A673 (cell line): ENCODE measurements at regions of chr16 and their contacts with region 1.

Region 1: GRCh38 chr16:74226338-74226954 is 70.2 kb upstream of the PSMD7 start:
- DNase-seq: peak; percentile 62
- H3K4me3 ChIP-seq: no peak overlapping the region
- H3K27ac ChIP-seq: no peak overlapping the region
- H3K4me1 ChIP-seq: peaks cover 9% of the 10 kb centered on the region
- H3K27me3 ChIP-seq: no peaks in the 10 kb centered on the region
- CTCF ChIP-seq: peak; percentile 79

Region 2: GRCh38 chr16:74034862-74035261 is 191.6 kb before region 1 on chr16:
- CTCF ChIA-PET with region 1: interaction called, 12 read pairs
- POLR2A ChIA-PET with region 1: no interaction called
- intact Hi-C with region 1: loop called (anchors 2 kb)
- DNase-seq: peak; percentile 49
- H3K4me3 ChIP-seq: no peak overlapping the region
- H3K27ac ChIP-seq: no peak overlapping the region
- H3K4me1 ChIP-seq: no peaks in the 10 kb centered on the region
- H3K27me3 ChIP-seq: no peaks in the 10 kb centered on the region
- CTCF ChIP-seq: peak; percentile 58

Region 3: GRCh38 chr16:74107795-74108618 is 118.4 kb before region 1 on chr16:
- CTCF ChIA-PET with region 1: interaction called, 10 read pairs
- POLR2A ChIA-PET with region 1: no interaction called
- intact Hi-C with region 1: loop called (anchors 5 kb)
- DNase-seq: peak; percentile 79
- H3K4me3 ChIP-seq: peak overlapping the region; percentile 21
- H3K27ac ChIP-seq: no peak overlapping the region
- H3K4me1 ChIP-seq: peaks cover 6% of the 10 kb centered on the region
- H3K27me3 ChIP-seq: no peaks in the 10 kb centered on the region
- CTCF ChIP-seq: peak; percentile 86